Dendritic cell treated with granulocyte-macrophage colony-stimulating factor and Interleukin-4, amounts not matched to agents 40 ng/mL and 50 ng/mL, for 4 days (primary cell): ENCODE measurements at regions of chr1 and their contacts with region 1.

Region 1: DNA sequence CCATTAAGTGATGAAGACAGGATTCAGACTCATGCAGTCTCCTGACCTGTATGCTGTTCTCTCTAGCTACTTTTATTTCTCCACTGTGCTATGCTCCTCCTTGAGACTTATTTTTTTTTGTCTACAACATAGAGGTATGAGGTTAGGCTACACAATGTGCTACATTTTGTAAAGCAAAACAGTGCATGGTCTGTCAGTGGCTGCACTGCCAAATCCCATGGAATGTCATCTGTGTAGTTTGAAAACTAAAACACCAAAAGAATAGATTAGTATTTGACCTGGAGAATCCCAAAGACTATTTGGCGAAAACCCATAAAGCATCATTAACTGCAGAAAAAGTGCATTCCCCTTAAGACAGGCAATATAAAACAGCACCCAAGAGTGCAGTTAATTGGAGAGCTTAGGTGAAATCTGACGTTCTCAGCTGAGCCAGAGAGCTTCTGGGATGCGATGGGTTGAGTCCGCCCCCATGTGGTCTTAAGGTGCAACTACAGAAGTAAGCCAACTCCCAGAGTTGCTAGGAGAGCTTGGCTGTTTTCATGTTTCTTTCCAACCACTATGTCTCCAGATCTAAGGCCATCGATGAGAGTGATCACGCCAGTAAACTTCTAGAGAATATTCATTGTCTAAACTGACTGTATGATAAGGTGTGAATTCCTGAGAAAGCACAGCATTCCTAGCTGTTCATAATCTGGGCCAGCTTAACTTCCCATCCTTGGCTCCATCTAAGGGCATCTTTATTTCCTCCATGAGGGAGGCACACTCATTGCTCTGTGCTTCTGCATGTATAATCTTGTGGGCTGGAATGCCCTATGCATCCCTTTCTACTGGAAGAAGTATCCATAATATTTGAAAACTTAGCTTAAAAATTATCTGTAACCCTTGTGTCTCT is 20.7 kb upstream of the CYP2J2 start:
- H3K4me3 Mint-ChIP-seq: no peak overlapping the region
- H3K27ac Mint-ChIP-seq: no peak overlapping the region
- H3K4me1 Mint-ChIP-seq: no peaks in the 10 kb centered on the region
- H3K27me3 Mint-ChIP-seq: no peaks in the 10 kb centered on the region

Region 2: GRCh38 chr1:59879574-59879973 is 67.7 kb before region 1 on chr1:
- intact Hi-C with region 1: loop called (anchors 1 kb)
- H3K4me3 Mint-ChIP-seq: no peak overlapping the region
- H3K27ac Mint-ChIP-seq: no peak overlapping the region
- H3K4me1 Mint-ChIP-seq: no peaks in the 10 kb centered on the region
- H3K27me3 Mint-ChIP-seq: no peaks in the 10 kb centered on the region

Region 3: DNA sequence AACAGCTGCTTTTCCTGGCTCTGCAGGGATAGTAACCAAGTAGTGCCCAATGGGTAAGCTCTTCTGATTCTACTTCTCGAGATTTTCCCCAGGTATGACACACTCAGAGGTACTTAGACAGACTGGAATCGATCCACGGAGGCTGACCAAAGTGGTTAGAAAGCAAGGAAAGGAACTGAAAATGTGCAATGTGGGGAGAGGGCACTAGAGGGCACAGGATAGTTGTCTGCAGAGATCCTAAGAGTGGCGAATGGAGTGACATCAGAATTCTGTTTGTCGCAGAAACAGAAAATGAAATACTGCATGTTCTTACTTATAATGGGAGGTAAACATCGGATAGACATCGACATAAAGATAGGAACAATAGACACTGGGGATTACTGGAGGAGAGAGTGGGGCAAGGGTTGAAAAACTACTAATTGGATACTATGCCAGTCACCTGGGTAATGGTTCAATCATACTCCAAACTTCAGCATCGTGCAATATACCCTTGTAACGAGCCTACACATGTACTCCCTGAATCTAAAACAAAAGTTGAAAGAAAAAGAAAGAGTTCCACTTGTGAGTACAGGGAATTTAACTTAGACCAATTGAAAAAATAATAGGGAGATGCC is 44.0 kb before region 1 on chr1:
- intact Hi-C with region 1: loop called (anchors 2 kb)
- H3K4me3 Mint-ChIP-seq: no peak overlapping the region
- H3K27ac Mint-ChIP-seq: no peak overlapping the region
- H3K4me1 Mint-ChIP-seq: peaks cover 5% of the 10 kb centered on the region
- H3K27me3 Mint-ChIP-seq: no peaks in the 10 kb centered on the region

Region 4: GRCh38 chr1:60008500-60008899 is 61.2 kb after region 1 on chr1:
- intact Hi-C with region 1: no loop called
- H3K4me3 Mint-ChIP-seq: no peak overlapping the region
- H3K27ac Mint-ChIP-seq: no peak overlapping the region
- H3K4me1 Mint-ChIP-seq: no peaks in the 10 kb centered on the region
- H3K27me3 Mint-ChIP-seq: no peaks in the 10 kb centered on the region